ENCODE measurements at regions of chr4 and their contacts with region 1.

Region 1: DNA sequence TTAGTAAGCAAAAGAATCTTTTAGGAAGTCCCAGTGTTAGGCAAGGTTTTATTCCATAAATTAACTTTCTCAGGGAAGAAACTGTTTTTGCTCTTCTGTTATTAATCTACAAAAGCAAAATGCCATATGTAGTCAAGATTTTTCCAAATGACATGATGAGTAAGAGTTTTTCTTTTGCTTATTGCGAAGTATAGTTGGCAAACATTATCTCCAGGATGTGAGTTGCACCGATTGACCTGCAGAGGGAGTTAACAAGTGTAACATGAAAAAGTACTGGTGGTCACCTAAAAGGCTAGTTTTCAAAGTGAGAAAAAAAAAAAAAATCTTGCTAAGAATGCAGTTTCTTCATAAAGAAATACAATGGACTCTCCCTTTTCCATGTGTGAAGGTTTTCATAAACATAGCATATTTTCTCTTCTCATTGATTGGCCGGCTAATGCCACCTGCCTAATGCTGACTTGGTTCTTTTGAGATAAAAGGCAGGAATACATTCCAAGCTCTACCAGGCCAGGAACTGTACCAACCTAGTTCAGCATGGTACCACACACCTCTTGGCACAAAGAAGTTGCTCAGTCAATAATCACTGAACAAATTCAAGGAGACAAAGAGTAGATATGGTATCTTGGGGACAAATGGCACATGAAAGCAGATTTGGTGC is 100.2 kb downstream of the LNX1 start:
- DNase-seq: peak; percentile 36
- H3K4me3 ChIP-seq: no peak overlapping the region
- H3K27ac ChIP-seq: peak overlapping the region; percentile 30
- H3K4me1 ChIP-seq: no peaks in the 10 kb centered on the region
- H3K27me3 ChIP-seq: no peaks in the 10 kb centered on the region
- CTCF ChIP-seq: peak; percentile 57

Region 2: DNA sequence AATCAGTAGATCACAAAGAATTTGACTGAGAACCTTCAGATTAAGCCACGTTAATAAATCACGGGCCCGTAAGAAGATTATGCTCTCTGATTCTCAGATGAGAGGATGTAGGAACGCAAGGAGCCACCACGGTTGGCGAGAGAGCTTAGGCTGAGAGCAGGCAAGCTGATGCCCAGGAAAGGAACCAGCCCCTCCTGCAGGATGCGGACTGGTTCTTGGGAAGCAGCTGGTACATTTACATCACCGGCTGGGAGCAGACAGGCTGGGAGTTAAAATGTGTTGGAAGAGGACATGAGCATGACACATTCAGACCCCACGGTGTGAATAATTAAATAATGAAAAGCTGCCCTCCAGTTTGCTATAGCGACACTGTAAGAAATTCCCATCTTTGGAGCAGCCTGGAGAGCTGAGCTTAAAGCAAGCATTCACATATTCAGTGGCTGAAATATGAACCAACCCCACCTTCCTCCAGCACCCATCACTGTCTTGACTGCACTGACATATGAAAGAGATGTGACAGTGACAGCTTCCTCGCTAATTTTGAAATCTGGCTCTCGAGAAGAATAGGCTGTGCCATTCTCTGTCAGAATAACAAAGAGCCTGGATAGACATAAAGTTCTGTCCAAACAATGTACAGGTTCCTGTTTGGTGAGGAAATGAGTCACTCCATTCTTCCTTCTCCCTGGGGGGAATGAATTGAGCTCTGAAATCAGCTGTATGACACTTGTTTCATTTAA is 67.1 kb after region 1 on chr4:
- intact Hi-C with region 1: loop called (anchors 10 kb)
- DNase-seq: no peak
- H3K4me3 ChIP-seq: no peak overlapping the region
- H3K27ac ChIP-seq: no peak overlapping the region
- H3K4me1 ChIP-seq: no peaks in the 10 kb centered on the region
- H3K27me3 ChIP-seq: no peaks in the 10 kb centered on the region
- CTCF ChIP-seq: no peak

Region 3: GRCh38 chr4:53656421-53657046 is 165.4 kb after region 1 on chr4:
- intact Hi-C with region 1: loop called (anchors 5 kb)
- DNase-seq: no peak
- H3K4me3 ChIP-seq: no peak overlapping the region
- H3K27ac ChIP-seq: peak overlapping the region; percentile 29
- H3K4me1 ChIP-seq: peaks cover 5% of the 10 kb centered on the region
- H3K27me3 ChIP-seq: no peaks in the 10 kb centered on the region
- CTCF ChIP-seq: peak; percentile 14

Measured in colonic mucosa (tissue), 4 donors.